H1 (cell line): ENCODE measurements at regions of chr14 and their contacts with region 1.

Region 1: GRCh38 chr14:100375963-100376735 is 53.0 kb downstream of the SLC25A47 start:
- DNase-seq: peak; percentile 89 to 95
- H3K4me3 ChIP-seq: peak within 1 kb of the TSS; percentile 89 to 98 (median 94)
- H3K27ac ChIP-seq: peak within 1 kb of the TSS; percentile 89
- H3K4me1 ChIP-seq: peaks cover 15 to 29% (median 18%) of the 10 kb centered on the region in 4 experiments; a peak in 6 of 7 replicates
- H3K27me3 ChIP-seq: no peaks in the 10 kb centered on the region
- CTCF ChIP-seq: no peak
- EP300 ChIP-seq: no peak
- POLR2A ChIP-seq: peak; percentile 85 to 99
- RAD21 ChIP-seq: no peak

Region 2: DNA sequence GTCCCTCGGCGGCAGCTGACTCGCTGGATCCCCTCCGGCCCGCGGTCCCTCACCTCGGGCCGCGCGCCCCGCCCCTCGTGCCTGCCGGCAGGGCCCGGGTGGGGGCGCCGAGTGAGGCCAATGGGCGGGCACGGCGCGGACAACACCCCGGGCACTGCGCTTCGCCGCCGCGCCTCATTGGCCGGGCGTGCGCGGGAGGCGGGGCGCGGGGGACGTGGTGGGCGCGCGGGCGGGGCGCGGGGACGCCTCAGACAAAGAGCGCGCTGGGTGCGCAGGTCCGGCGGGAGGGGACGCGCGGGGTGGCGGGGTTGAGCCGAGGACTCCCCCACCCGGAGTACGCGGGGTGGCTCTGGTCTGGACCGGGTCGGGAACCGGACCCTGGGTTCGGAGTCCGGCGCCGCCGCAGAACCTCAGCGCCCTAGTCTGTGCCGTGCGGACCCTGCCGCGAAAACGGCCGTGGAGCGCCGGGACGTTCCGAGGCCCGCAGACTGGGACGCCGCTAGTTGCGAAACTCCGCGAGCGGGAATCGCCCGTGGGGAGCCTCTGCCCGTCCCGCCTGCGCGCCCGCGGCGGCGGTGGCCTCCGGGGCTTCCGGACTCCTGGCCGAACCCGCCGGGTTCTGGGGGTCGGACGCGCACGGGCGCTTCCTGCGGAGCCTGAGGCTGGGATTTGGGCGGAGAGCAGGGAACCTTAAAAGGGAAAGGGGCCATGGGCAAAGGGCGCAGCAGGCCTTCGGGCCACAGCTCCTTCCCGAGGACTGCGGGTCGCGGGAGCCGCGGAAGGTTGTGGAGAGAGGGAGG is 69.5 kb before region 1 on chr14 and contains the start of gene SLC25A29:
- CTCF ChIA-PET with region 1: interaction called, 10 read pairs
- POLR2A ChIA-PET with region 1: interaction called, 10 read pairs
- DNase-seq: peak in 1 of 2 experiments; percentile 89
- H3K4me3 ChIP-seq: peak within 1 kb of the TSS; percentile 70 to 95 (median 81)
- H3K27ac ChIP-seq: peak within 1 kb of the TSS; percentile 74
- H3K4me1 ChIP-seq: peaks cover 10 to 29% (median 19%) of the 10 kb centered on the region in 4 experiments
- H3K27me3 ChIP-seq: no peaks in the 10 kb centered on the region; a peak in 1 of 7 replicates
- CTCF ChIP-seq: no peak
- EP300 ChIP-seq: no peak
- POLR2A ChIP-seq: peak in 1 of 2 experiments; percentile 56; a peak in 2 of 3 replicates
- RAD21 ChIP-seq: no peak; a peak in 1 of 4 replicates
- total RNA-seq, gene SLC25A29: 135 TPM in 2 replicates

Region 3: DNA sequence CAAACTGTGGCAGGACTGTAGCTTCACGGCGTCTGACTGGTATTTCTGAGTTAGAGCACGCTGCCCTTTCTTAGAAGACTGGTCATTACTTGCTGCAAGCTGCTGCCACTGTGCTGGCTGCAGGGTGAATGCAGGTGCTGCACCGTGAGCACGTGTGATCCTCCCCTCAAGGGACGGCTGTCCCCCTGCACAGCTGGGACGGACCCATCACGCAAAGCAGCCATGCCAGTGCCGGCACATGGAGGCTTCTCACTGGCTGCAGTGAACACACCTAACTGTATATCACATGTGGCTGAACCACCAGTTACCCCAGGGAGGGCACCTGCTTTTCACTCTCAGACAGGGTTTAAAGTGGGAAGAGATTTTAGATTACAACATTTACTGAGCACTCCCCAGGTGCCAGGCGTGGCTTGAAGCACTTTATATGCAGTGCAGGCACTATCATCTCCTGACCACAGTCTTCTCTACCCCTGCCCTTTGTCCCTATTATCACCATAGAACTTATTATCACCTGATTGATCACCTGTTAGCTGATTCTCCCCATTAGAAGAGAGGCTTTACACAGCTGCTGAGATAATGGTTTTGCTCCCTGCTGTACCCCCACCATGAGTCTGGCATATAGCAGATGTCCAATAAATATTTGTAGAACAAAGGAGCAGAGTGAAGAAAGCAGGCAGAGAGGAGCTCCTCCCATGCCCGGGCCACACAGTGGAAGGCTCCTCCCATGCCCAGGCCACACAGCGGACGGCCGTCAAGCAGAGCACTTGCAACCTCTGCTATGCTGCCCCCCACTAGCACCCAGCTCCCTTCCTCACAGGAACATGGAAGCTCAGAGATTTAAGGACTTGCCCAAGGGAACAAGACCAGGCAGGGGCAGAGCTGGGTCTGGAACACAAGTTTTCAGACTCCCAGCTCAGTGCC is 27.1 kb before region 1 on chr14:
- CTCF ChIA-PET with region 1: no interaction called
- POLR2A ChIA-PET with region 1: interaction called, 20 read pairs
- DNase-seq: no peak
- H3K4me3 ChIP-seq: no peak overlapping the region
- H3K27ac ChIP-seq: no peak overlapping the region
- H3K4me1 ChIP-seq: no peaks in the 10 kb centered on the region
- H3K27me3 ChIP-seq: no peaks in the 10 kb centered on the region
- CTCF ChIP-seq: no peak
- EP300 ChIP-seq: no peak
- POLR2A ChIP-seq: no peak
- RAD21 ChIP-seq: no peak